Natural killer cell (primary cell): ENCODE measurements at regions of chr12 and their contacts with region 1.

Region 1: GRCh38 chr12:108633534-108634248 is at the start of gene SELPLG:
- DNase-seq: peak; percentile 84 to 95
- ATAC-seq: peak; percentile 38 to 84 (median 69)
- H3K4me3 ChIP-seq: peak within 1 kb of the TSS; percentile 58
- H3K4me3 Mint-ChIP-seq: peak within 1 kb of the TSS; percentile 100
- H3K27ac ChIP-seq: peak within 1 kb of the TSS; percentile 98
- H3K27ac Mint-ChIP-seq: peak within 1 kb of the TSS; percentile 92 to 100
- H3K4me1 ChIP-seq: peaks cover 86% of the 10 kb centered on the region
- H3K4me1 Mint-ChIP-seq: peaks cover 61% of the 10 kb centered on the region in 2 donors
- H3K27me3 ChIP-seq: no peaks in the 10 kb centered on the region
- H3K27me3 Mint-ChIP-seq: no peaks in the 10 kb centered on the region
- CTCF ChIP-seq: no peak
- total RNA-seq, gene SELPLG: 179 to 201 (median 201) TPM

Region 2: GRCh38 chr12:108337235-108338223 is 296.2 kb before region 1 on chr12:
- intact Hi-C with region 1: loop called (anchors 10 kb)
- DNase-seq: peak; percentile 17 to 36
- ATAC-seq: peak; percentile 40 to 57 (median 53)
- H3K4me3 ChIP-seq: peak overlapping the region; percentile 60
- H3K4me3 Mint-ChIP-seq: peak overlapping the region; percentile 91
- H3K27ac ChIP-seq: peak overlapping the region; percentile 71
- H3K27ac Mint-ChIP-seq: peak overlapping the region; percentile 94 to 96
- H3K4me1 ChIP-seq: peaks cover 66% of the 10 kb centered on the region
- H3K4me1 Mint-ChIP-seq: peaks cover 62 to 82% of the 10 kb centered on the region in 2 donors
- H3K27me3 ChIP-seq: no peaks in the 10 kb centered on the region
- H3K27me3 Mint-ChIP-seq: no peaks in the 10 kb centered on the region
- CTCF ChIP-seq: peak; percentile 69

Region 3: DNA sequence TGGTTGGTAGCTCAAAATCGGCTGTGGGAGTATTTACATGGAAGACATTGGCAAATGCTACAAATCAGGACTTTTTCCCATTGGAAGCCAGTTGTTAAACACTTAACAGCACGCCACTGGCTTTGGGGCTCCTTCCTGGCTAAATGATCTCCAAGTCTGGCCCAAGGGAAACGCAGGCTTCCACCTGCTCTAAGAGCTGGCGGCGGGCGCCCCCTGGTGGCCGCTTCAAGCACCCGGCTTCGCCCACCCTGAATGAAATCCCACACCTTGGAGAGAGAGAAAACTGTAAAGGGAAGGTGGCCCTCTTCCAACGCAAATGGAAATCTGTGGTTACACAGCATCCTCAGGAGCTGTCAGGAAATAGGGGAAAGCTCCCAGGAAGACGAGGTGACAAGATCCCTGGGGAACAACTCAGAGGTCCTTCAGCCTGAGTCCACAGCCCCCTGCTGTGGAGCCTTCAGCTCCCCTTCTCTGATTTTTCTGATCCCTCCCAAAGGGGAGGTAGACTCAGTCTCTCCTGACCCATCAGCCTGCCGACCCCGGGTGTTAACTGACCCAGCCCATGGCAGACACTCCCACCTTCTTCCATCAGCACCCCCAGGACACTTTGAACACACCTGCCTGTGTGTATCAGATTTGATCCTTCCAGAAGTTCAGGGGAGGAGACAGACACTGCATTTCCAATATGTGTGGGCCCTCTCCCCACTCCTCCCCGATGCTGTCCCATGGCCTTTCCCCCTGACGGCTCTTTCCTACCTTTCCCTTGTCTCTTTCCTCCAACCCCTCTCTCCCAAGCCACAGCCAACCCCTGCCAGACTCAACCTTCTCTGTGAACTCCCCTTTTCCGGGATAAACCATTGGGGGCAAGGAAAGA is 15.4 kb before region 1 on chr12:
- intact Hi-C with region 1: loop called (anchors 1 kb)
- DNase-seq: peak; percentile 76 to 89
- ATAC-seq: peak; percentile 39 to 65 (median 45)
- H3K4me3 ChIP-seq: no peak overlapping the region
- H3K4me3 Mint-ChIP-seq: peak overlapping the region; percentile 56
- H3K27ac ChIP-seq: peak overlapping the region; percentile 79
- H3K27ac Mint-ChIP-seq: peak overlapping the region; percentile 92 to 100
- H3K4me1 ChIP-seq: peaks cover 56% of the 10 kb centered on the region
- H3K4me1 Mint-ChIP-seq: peaks cover 68 to 70% of the 10 kb centered on the region in 2 donors
- H3K27me3 ChIP-seq: no peaks in the 10 kb centered on the region
- H3K27me3 Mint-ChIP-seq: no peaks in the 10 kb centered on the region
- CTCF ChIP-seq: peak; percentile 98

Region 4: DNA sequence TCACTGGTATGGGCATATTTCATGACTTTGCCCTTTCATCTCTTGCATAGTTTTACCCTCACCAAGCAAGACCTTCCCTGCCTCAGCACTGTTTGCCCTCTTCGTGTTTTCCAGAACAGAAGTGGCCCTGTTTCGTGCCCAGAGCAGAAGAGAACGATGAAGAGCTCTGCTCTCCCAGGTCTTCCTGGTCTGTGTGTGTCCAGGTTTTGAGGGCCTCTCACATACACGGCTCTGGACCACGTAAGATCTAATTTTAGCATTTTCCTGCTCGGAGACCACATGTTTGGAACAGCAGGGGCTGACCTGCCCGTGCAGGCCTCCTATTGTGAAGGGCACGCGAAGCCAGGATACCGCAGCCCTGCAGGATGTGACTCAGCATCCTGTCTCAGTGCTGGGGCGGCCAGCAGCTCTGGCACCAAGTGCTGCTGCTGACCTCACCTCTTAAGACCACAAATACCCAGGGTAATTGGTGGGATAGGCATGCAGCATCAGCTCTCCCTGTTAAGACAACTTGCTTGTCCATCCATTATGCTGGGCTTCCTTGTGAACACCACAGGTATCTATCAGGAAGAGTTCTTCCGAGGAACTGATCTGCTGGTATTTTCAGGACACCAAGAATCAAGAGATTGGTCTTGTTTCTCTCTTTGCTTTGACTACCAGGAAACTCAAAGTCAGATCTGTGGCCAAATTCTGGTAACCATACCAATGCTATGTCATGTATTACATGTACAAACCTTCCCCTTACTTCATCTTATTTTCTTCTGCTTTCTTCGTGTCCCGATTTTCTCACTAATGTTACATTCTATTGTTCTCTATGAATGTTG is 204.7 kb after region 1 on chr12:
- intact Hi-C with region 1: loop called (anchors 1 kb)
- DNase-seq: peak; percentile 81 to 83
- ATAC-seq: peak; percentile 91 to 97 (median 96)
- H3K4me3 ChIP-seq: no peak overlapping the region
- H3K4me3 Mint-ChIP-seq: peak overlapping the region; percentile 80
- H3K27ac ChIP-seq: peak overlapping the region; percentile 90
- H3K27ac Mint-ChIP-seq: peak overlapping the region; percentile 98 to 99
- H3K4me1 ChIP-seq: peaks cover 39% of the 10 kb centered on the region
- H3K4me1 Mint-ChIP-seq: peaks cover 74 to 75% of the 10 kb centered on the region in 2 donors
- H3K27me3 ChIP-seq: no peaks in the 10 kb centered on the region
- H3K27me3 Mint-ChIP-seq: no peaks in the 10 kb centered on the region
- CTCF ChIP-seq: no peak

Region 5: GRCh38 chr12:109052414-109053323 is 419.0 kb after region 1 on chr12 and contains the start of gene USP30:
- intact Hi-C with region 1: loop called (anchors 5 kb)
- DNase-seq: peak; percentile 83 to 94
- ATAC-seq: peak; percentile 65 to 90 (median 85)
- H3K4me3 ChIP-seq: peak within 1 kb of the TSS; percentile 87
- H3K4me3 Mint-ChIP-seq: peak within 1 kb of the TSS; percentile 99
- H3K27ac ChIP-seq: peak within 1 kb of the TSS; percentile 94
- H3K27ac Mint-ChIP-seq: peak within 1 kb of the TSS; percentile 94 to 97
- H3K4me1 ChIP-seq: peaks cover 23% of the 10 kb centered on the region
- H3K4me1 Mint-ChIP-seq: peaks cover 23 to 27% of the 10 kb centered on the region in 2 donors
- H3K27me3 ChIP-seq: no peaks in the 10 kb centered on the region
- H3K27me3 Mint-ChIP-seq: no peaks in the 10 kb centered on the region
- CTCF ChIP-seq: no peak
- total RNA-seq, gene USP30: 18.4 to 20.8 (median 20.1) TPM